ENCODE measurements at regions of chr19 and their contacts with region 1.

Region 1: GRCh38 chr19:41570639-41571112 is 5.3 kb upstream of the CEACAM21 start:
- DNase-seq: peak; percentile 89

Region 2: GRCh38 chr19:41439441-41440222 is 131.0 kb before region 1 on chr19 and contains the start of gene DMAC2:
- in situ Hi-C with region 1: loop called (anchors 10 kb)
- DNase-seq: peak; percentile 97

Region 3: GRCh38 chr19:41505105-41505504 is 65.6 kb before region 1 on chr19:
- in situ Hi-C with region 1: no loop called
- DNase-seq: no peak

Measured in KBM-7 (cell line).